ENCODE measurements at regions of chr1 and their contacts with region 1.

Region 1: GRCh38 chr1:22093513-22093912 is 41.0 kb downstream of the CDC42 start:
- H3K4me3 ChIP-seq: no peak overlapping the region
- H3K27ac ChIP-seq: no peak overlapping the region
- H3K4me1 ChIP-seq: no peaks in the 10 kb centered on the region; the same call in 1 of the 2 replicates
- CTCF ChIP-seq: no peak

Region 2: GRCh38 chr1:22105611-22106207 is 12.2 kb after region 1 on chr1:
- CTCF ChIA-PET with region 1: interaction called, 14 read pairs
- POLR2A ChIA-PET with region 1: no interaction called
- H3K4me3 ChIP-seq: no peak overlapping the region
- H3K27ac ChIP-seq: no peak overlapping the region
- H3K4me1 ChIP-seq: peaks cover 4% of the 10 kb centered on the region; the same call in 1 of the 2 replicates
- CTCF ChIP-seq: 0 out of 2 replicates have a peak, but pooled peaks have one; percentile 52

Region 3: DNA sequence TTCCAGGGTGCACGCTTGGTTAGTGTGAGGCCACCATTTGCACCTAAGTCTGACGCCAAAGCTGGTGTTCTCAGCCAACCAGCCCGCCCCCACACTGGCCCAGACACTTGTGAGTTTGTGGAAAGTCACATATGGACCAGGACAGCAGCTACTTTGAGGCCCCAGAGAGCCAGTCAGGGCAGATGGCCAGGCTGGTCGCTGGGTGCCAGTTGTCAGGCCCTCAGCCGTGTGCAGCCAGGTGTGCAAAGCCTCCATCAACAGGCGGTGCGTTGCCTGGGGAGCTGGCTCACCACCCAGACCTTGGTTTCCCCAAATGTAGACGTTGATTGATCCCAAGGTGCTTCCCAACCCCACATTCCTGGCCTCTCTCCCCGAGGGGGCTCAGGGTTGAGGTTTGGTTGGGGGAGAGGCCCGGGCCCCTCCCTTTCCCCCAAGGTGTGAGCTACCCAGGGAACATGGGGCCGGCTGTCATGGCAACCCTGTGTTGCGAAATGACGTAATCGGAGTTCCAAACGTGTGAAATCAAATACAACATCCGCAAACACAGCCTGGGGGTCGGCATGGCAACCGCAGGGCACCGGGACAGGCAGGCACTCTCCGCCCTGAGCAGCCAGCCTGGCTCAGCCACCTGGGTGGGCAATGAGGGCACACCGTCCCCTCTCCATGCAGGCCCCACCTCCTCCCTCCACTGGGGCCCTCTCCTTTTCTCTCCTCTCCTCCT is 91.5 kb after region 1 on chr1:
- CTCF ChIA-PET with region 1: no interaction called
- POLR2A ChIA-PET with region 1: no interaction called
- H3K4me3 ChIP-seq: no peak overlapping the region
- H3K27ac ChIP-seq: no peak overlapping the region
- H3K4me1 ChIP-seq: no peaks in the 10 kb centered on the region
- CTCF ChIP-seq: no peak

Measured in HEK293 (cell line).